Activated CD4-positive, alpha-beta memory T cell treated with anti-CD3 and anti-CD28 coated beads for 36 hours (primary cell): ENCODE measurements at regions of chr2 and their contacts with region 1.

Region 1: DNA sequence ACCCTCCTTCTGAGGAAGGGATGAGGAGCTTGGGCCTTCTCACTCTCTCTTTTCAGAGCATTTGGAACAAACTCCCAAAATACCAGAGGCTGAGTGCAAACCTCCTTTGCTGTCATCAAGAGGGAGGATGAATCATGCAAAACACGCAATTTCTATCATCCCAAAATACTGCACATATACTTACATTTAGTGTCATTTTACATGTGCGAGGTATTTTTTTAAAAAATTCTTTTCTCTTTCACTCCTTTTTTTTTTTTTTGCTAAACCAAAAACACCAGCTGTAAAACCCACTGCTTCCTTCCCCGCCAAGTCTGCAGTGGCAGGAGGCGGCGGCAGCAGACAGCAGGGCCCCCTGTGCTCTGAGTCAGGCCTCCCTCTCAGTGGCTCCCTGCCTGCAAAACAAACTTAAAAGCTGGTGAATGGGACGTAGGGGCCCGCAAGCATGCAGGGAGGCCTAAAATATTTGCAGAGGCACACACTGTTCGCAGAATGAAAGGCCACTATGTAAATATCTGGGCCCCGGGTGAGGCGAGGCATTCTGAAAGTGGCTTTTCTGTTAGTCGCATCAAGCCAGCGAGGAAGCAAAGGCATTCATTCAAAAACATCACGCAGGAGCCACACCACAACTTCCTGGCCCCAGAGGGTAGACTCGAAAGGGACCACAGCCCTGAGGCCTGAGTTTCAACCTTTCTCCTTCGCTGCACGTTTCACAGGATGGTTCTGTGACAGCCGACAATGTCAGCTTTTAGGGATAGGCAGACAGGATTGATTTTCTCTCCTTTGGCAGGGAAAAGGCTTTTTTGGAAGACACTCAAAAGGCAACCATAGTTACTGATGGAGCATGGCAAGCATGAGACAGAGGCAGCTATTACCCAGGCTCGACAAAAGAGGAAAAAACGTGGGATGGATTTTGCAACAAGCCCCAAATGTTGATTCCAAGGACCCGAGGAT is 73.4 kb downstream of the ACTR2 start:
- DNase-seq: peak; percentile 87
- H3K4me3 Mint-ChIP-seq: peak overlapping the region; percentile 50
- H3K27ac Mint-ChIP-seq: peak overlapping the region; percentile 77
- H3K4me1 Mint-ChIP-seq: peaks cover 45% of the 10 kb centered on the region
- H3K27me3 Mint-ChIP-seq: peaks cover 15% of the 10 kb centered on the region

Region 2: GRCh38 chr2:65227425-65228262 is 73.4 kb before region 1 on chr2 and contains the start of gene ACTR2:
- CTCF ChIA-PET with region 1: no interaction called
- POLR2A ChIA-PET with region 1: interaction called, 10 read pairs
- intact Hi-C with region 1: loop called (anchors 1 kb)
- DNase-seq: peak; percentile 97
- H3K4me3 Mint-ChIP-seq: peak within 1 kb of the TSS; percentile 100
- H3K27ac Mint-ChIP-seq: peak within 1 kb of the TSS; percentile 99
- H3K4me1 Mint-ChIP-seq: peaks cover 32% of the 10 kb centered on the region
- H3K27me3 Mint-ChIP-seq: no peaks in the 10 kb centered on the region
- total RNA-seq, gene ACTR2: 401 to 406 TPM

Region 3: GRCh38 chr2:65264821-65265670 is 36.0 kb before region 1 on chr2:
- CTCF ChIA-PET with region 1: no interaction called
- POLR2A ChIA-PET with region 1: no interaction called
- intact Hi-C with region 1: no loop called
- DNase-seq: no peak
- H3K4me3 Mint-ChIP-seq: no peak overlapping the region
- H3K27ac Mint-ChIP-seq: no peak overlapping the region
- H3K4me1 Mint-ChIP-seq: peaks cover 12% of the 10 kb centered on the region
- H3K27me3 Mint-ChIP-seq: no peaks in the 10 kb centered on the region

Region 4: GRCh38 chr2:65357095-65357958 is 56.3 kb after region 1 on chr2:
- CTCF ChIA-PET with region 1: no interaction called
- POLR2A ChIA-PET with region 1: no interaction called
- intact Hi-C with region 1: loop called (anchors 1 kb)
- DNase-seq: peak; percentile 27
- H3K4me3 Mint-ChIP-seq: no peak overlapping the region
- H3K27ac Mint-ChIP-seq: peak overlapping the region; percentile 28
- H3K4me1 Mint-ChIP-seq: peaks cover 34% of the 10 kb centered on the region
- H3K27me3 Mint-ChIP-seq: no peaks in the 10 kb centered on the region

Region 5: GRCh38 chr2:65366595-65367125 is 65.6 kb after region 1 on chr2:
- CTCF ChIA-PET with region 1: no interaction called
- POLR2A ChIA-PET with region 1: no interaction called
- intact Hi-C with region 1: loop called (anchors 1 kb)
- DNase-seq: peak; percentile 56
- H3K4me3 Mint-ChIP-seq: no peak overlapping the region
- H3K27ac Mint-ChIP-seq: no peak overlapping the region
- H3K4me1 Mint-ChIP-seq: peaks cover 19% of the 10 kb centered on the region
- H3K27me3 Mint-ChIP-seq: no peaks in the 10 kb centered on the region

Region 6: GRCh38 chr2:65382776-65383357 is 81.8 kb after region 1 on chr2:
- CTCF ChIA-PET with region 1: interaction called, 8 read pairs
- POLR2A ChIA-PET with region 1: interaction called, 12 read pairs
- intact Hi-C with region 1: loop called (anchors 1 kb)
- DNase-seq: peak; percentile 96
- H3K4me3 Mint-ChIP-seq: no peak overlapping the region
- H3K27ac Mint-ChIP-seq: no peak overlapping the region
- H3K4me1 Mint-ChIP-seq: peaks cover 28% of the 10 kb centered on the region
- H3K27me3 Mint-ChIP-seq: peaks cover 4% of the 10 kb centered on the region